WTC11 (cell line): ENCODE measurements at regions of chr17 and their contacts with region 1.

Region 1: GRCh38 chr17:29293890-29294579 is at the start of gene NUFIP2:
- DNase-seq: peak; percentile 99
- ATAC-seq: peak; percentile 94
- H3K4me3 Mint-ChIP-seq: peak within 1 kb of the TSS; percentile 100
- H3K27ac Mint-ChIP-seq: peak within 1 kb of the TSS; percentile 99
- H3K4me1 Mint-ChIP-seq: peaks cover 32% of the 10 kb centered on the region
- H3K27me3 Mint-ChIP-seq: no peaks in the 10 kb centered on the region
- CTCF ChIP-seq: no peak
- total RNA-seq, gene NUFIP2: 87.1 to 93.1 TPM (median 90.5 TPM) in 3 replicates

Region 2: DNA sequence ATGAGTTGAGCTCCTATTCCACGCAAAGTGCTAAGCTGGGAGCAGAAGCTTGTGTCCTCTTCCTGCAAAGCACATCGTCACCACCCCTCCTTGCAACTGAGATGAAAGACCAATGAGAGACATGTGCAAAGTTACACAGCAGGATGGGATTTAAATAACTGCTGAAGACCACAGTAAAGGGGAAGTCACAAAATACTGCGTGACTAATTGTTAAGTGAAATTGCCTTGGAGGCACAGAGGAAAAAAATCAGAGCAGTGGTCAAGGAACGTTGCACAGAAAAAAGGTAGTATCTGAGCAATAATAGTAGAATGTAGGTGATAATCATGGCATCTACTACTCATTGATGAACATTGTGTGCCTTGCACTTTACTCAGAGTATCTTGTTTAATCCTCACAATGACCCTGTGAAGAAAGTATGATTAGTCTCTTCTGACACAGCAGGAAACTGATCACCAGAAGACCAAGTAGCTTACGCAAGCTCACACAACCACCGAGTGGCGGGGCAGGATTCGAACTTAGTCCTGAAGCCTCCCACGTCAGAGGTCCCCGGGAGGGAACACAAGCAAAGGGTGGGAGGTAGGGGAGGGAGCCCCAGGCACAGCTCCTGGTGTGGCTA is 98.5 kb before region 1 on chr17:
- CTCF ChIA-PET with region 1: no interaction called
- POLR2A ChIA-PET with region 1: no interaction called
- DNase-seq: no peak
- ATAC-seq: no peak
- H3K4me3 Mint-ChIP-seq: no peak overlapping the region
- H3K27ac Mint-ChIP-seq: no peak overlapping the region
- H3K4me1 Mint-ChIP-seq: peaks cover 6% of the 10 kb centered on the region; the same call in 1 of the 2 replicates
- H3K27me3 Mint-ChIP-seq: no peaks in the 10 kb centered on the region
- CTCF ChIP-seq: no peak

Region 3: DNA sequence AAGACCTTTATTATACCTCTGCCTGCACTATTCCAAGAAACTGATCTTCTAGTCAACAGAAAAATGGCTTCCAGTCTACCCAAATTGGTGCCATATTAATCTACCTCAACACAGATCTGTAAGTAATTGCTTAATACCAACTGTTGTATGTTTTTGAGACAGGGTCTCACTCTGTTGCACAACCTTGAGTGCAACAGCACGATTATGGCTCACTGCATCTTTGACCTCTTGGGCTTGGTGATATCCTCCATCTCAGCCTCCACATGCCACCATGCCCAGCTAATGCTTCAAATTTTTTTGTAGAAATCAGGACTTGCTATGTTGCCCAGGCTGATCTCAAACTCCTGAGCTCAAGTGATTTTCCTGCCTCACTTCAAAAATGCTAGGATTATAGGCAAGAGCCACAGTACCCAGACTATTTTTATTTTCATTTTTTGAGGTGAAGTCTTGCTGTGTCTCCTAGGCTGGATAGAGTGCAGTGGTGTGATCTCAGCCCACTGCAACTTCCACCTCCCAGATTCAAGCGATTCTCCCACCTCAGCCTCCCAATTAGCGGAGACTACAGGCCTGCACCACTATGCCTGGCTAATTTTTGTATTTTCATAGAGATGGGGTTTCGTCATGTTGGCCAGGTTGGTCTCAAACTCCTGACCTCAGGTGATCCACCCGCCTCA is 14.5 kb before region 1 on chr17:
- CTCF ChIA-PET with region 1: interaction called, 16 read pairs
- POLR2A ChIA-PET with region 1: interaction called, 3 read pairs
- DNase-seq: no peak
- ATAC-seq: no peak
- H3K4me3 Mint-ChIP-seq: 0 out of 2 replicates have a peak overlapping the region, but pooled peaks have one; percentile 21
- H3K27ac Mint-ChIP-seq: peak overlapping the region; percentile 79; the same call in 1 of the 2 replicates
- H3K4me1 Mint-ChIP-seq: peaks cover 54% of the 10 kb centered on the region
- H3K27me3 Mint-ChIP-seq: no peaks in the 10 kb centered on the region
- CTCF ChIP-seq: no peak

Region 4: GRCh38 chr17:29579866-29580771 is 286.1 kb after region 1 on chr17:
- CTCF ChIA-PET with region 1: no interaction called
- POLR2A ChIA-PET with region 1: no interaction called
- DNase-seq: peak; percentile 86
- ATAC-seq: peak; percentile 86
- H3K4me3 Mint-ChIP-seq: no peak overlapping the region
- H3K27ac Mint-ChIP-seq: peak overlapping the region; percentile 28; the same call in 1 of the 2 replicates
- H3K4me1 Mint-ChIP-seq: peaks cover 17% of the 10 kb centered on the region
- H3K27me3 Mint-ChIP-seq: no peaks in the 10 kb centered on the region
- CTCF ChIP-seq: peak; percentile 68